Common myeloid progenitor, CD34-positive (primary cell): ENCODE measurements at regions of chr1 and their contacts with region 1.

Region 1: DNA sequence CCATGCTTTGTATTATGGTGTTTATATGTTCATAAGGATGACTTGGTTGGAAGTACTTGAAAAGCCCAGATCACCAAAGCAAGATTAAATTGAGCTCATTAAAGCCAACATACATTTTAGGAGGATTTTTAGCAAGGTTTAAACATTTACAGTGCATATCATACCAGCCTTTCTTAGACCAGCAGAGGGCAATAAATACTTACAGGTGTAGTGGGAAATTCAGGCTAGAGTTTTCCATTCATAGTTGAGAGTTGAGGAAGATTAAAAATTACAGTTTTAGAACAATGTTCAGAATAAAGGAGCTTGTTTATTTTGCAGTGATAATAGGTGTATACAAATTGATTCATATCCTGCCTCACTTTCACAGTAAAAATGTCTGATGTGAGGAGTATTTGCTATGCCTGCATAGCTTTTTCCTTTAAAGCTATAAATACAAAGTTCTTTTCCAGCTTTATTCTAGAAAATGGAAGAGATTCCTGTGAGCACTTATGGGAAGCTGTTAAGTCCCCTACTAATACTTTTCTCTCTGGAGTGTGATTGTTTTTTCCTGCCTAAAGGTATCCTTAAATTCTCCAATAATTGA is 35.3 kb downstream of the DTL start:
- DNase-seq: peak; percentile 59 to 69 (median 66)
- H3K4me3 ChIP-seq: no peak overlapping the region
- H3K27ac ChIP-seq: no peak overlapping the region
- H3K4me1 ChIP-seq: peaks cover 0 to 7% (median 0%) of the 10 kb centered on the region in 4 experiments
- H3K27me3 ChIP-seq: no peaks in the 10 kb centered on the region

Region 2: GRCh38 chr1:212035123-212035834 is 35.5 kb before region 1 on chr1 and contains the starts of genes DTL and INTS7:
- CTCF ChIA-PET with region 1: interaction called, 10 read pairs
- POLR2A ChIA-PET with region 1: no interaction called
- DNase-seq: peak; percentile 99 to 100 (median 99)
- H3K4me3 ChIP-seq: peak within 1 kb of the TSS; percentile 84 to 99 (median 95)
- H3K27ac ChIP-seq: peak within 1 kb of the TSS; percentile 72 to 90
- H3K4me1 ChIP-seq: peaks cover 8 to 48% (median 29%) of the 10 kb centered on the region in 4 experiments
- H3K27me3 ChIP-seq: no peaks in the 10 kb centered on the region

Region 3: DNA sequence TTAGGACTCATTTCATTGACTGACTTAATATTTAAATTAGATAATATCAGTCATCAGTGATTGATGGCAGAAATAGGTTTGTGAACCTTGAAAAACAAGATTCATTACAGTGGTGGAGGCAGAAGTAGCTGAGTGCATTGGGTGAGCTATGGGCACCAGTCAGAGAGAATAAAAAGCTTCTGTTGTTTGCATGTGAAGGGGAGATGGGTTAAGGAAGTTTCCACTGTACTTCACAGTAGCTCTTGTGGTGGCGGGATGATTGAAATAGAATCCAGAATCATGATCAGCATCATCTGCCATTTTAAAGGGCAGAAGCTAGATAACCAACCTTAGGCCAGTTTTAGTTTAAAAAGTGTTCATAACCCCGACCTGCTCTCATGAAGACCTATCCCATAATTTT is 30.9 kb after region 1 on chr1:
- CTCF ChIA-PET with region 1: interaction called, 12 read pairs
- POLR2A ChIA-PET with region 1: no interaction called
- DNase-seq: no peak
- H3K4me3 ChIP-seq: no peak overlapping the region
- H3K27ac ChIP-seq: no peak overlapping the region
- H3K4me1 ChIP-seq: no peaks in the 10 kb centered on the region
- H3K27me3 ChIP-seq: no peaks in the 10 kb centered on the region

Region 4: DNA sequence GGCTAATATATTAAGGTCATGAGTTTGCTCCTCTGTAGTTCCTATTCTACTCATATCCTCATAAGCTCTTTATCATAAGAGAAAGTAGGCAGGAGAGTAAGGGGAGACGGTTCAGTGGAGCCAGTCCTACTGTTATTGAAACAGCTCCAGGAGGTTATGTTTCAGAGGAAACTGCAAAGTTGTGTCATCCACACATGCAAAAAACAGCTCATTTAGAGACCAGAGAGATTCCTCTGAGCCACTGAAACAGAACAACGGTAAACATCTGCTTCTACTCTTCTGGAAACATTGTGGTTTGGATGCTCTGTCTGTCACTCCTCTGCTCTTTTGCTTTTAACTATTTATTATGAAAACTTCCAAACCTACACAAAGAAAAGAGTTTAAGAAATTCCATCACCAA is 148.1 kb after region 1 on chr1:
- CTCF ChIA-PET with region 1: no interaction called
- POLR2A ChIA-PET with region 1: no interaction called
- DNase-seq: peak in 2 of 3 donors; percentile 13 to 21
- H3K4me3 ChIP-seq: no peak overlapping the region
- H3K27ac ChIP-seq: no peak overlapping the region
- H3K4me1 ChIP-seq: no peaks in the 10 kb centered on the region
- H3K27me3 ChIP-seq: no peaks in the 10 kb centered on the region

Region 5: DNA sequence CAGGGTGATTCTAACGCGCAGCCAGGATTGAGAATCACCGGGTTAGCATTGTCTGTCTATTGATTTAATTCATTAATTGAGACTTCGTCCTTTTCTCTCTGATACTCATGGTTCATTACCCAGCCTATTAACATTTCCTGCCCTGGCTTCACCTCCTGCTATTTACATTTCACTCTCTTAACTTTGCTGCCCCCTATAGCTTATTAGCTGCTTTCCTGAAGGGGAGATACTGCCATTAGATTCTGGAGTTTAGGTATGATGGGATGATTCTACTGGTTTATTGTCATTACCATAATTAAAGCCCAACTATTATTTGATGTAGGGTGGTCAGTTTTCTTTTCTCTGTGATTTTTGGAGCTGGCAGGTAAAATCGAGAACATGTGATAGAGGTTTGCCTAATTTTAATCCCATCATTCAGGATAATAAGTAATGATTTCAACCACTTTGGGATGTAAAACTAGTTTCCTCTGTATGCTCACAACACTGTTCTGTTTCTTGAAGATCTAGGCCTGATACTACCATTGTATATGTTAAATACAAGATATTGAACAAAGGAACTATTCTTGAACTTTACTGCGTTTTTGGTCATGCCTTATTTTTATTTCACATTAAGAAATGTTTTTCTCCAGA is 220.8 kb after region 1 on chr1:
- CTCF ChIA-PET with region 1: interaction called, 111 read pairs
- POLR2A ChIA-PET with region 1: no interaction called
- DNase-seq: peak; percentile 72 to 77 (median 77)
- H3K4me3 ChIP-seq: no peak overlapping the region
- H3K27ac ChIP-seq: peak overlapping the region in 1 of 2 experiments; percentile 52
- H3K4me1 ChIP-seq: peaks cover 35 to 66% (median 38%) of the 10 kb centered on the region in 4 experiments
- H3K27me3 ChIP-seq: no peaks in the 10 kb centered on the region

Region 6: GRCh38 chr1:212368073-212368484 is 297.3 kb after region 1 on chr1:
- CTCF ChIA-PET with region 1: interaction called, 84 read pairs
- POLR2A ChIA-PET with region 1: no interaction called
- DNase-seq: peak; percentile 75 to 89 (median 86)
- H3K4me3 ChIP-seq: no peak overlapping the region
- H3K27ac ChIP-seq: no peak overlapping the region
- H3K4me1 ChIP-seq: no peaks in the 10 kb centered on the region
- H3K27me3 ChIP-seq: no peaks in the 10 kb centered on the region